ENCODE measurements at regions of chr15 and their contacts with region 1.

Region 1: GRCh38 chr15:31193291-31193690 is 91.8 kb upstream of the TRPM1 start:
- DNase-seq: no peak
- H3K4me3 ChIP-seq: no peak overlapping the region
- H3K27ac ChIP-seq: no peak overlapping the region
- H3K4me1 ChIP-seq: no peaks in the 10 kb centered on the region
- CTCF ChIP-seq: no peak

Region 2: GRCh38 chr15:31292391-31293015 is 99.2 kb after region 1 on chr15:
- CTCF ChIA-PET with region 1: no interaction called
- POLR2A ChIA-PET with region 1: no interaction called
- intact Hi-C with region 1: no loop called
- DNase-seq: no peak
- H3K4me3 ChIP-seq: no peak overlapping the region
- H3K27ac ChIP-seq: no peak overlapping the region
- H3K4me1 ChIP-seq: peaks cover 7% of the 10 kb centered on the region
- CTCF ChIP-seq: no peak

Region 3: GRCh38 chr15:31365655-31366127 is 172.4 kb after region 1 on chr15:
- CTCF ChIA-PET with region 1: no interaction called
- POLR2A ChIA-PET with region 1: no interaction called
- intact Hi-C with region 1: no loop called
- DNase-seq: peak; percentile 75
- H3K4me3 ChIP-seq: peak overlapping the region; percentile 47
- H3K27ac ChIP-seq: peak overlapping the region; percentile 65
- H3K4me1 ChIP-seq: peaks cover 94% of the 10 kb centered on the region
- CTCF ChIP-seq: peak; percentile 46; the same call in 1 of the 2 replicates

Region 4: DNA sequence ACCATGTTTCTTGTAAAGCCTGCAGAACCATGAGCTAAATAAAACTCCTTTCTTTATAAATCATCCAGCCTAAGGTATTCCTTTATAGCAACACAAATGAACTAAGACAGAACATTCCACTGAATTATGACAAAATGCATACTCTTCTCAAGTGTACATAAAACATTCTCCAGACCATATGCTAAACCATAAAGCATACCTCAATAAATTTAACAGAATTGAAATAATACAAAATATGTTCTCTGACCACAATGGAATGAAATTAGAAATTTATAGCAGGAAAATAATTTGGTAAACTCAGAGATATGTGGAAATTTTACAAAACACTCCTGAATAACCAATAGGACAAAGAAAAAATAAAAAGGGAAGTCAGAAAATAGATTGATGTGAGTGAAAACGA is 221.9 kb after region 1 on chr15:
- CTCF ChIA-PET with region 1: no interaction called
- POLR2A ChIA-PET with region 1: no interaction called
- intact Hi-C with region 1: loop called (anchors 5 kb)
- DNase-seq: no peak
- H3K4me3 ChIP-seq: no peak overlapping the region
- H3K27ac ChIP-seq: no peak overlapping the region
- H3K4me1 ChIP-seq: no peaks in the 10 kb centered on the region
- CTCF ChIP-seq: no peak

Measured in OCI-LY7 (cell line).